ENCODE measurements at regions of chr6 and their contacts with region 1.

Region 1: GRCh38 chr6:26122793-26123674 is 35.8 kb downstream of the HFE start:
- DNase-seq: peak; percentile 79 to 97 (median 95)
- H3K4me3 ChIP-seq: peak overlapping the region; percentile 90
- H3K4me3 Mint-ChIP-seq: peak overlapping the region; percentile 92 to 100 (median 97)
- H3K27ac ChIP-seq: peak overlapping the region; percentile 97
- H3K27ac Mint-ChIP-seq: peak overlapping the region; percentile 95 to 99 (median 98)
- H3K4me1 ChIP-seq: peaks cover 26% of the 10 kb centered on the region
- H3K4me1 Mint-ChIP-seq: peaks cover 30 to 40% (median 38%) of the 10 kb centered on the region in 3 donors
- H3K27me3 ChIP-seq: no peaks in the 10 kb centered on the region
- H3K27me3 Mint-ChIP-seq: peaks cover 0 to 10% of the 10 kb centered on the region in 2 donors

Region 2: DNA sequence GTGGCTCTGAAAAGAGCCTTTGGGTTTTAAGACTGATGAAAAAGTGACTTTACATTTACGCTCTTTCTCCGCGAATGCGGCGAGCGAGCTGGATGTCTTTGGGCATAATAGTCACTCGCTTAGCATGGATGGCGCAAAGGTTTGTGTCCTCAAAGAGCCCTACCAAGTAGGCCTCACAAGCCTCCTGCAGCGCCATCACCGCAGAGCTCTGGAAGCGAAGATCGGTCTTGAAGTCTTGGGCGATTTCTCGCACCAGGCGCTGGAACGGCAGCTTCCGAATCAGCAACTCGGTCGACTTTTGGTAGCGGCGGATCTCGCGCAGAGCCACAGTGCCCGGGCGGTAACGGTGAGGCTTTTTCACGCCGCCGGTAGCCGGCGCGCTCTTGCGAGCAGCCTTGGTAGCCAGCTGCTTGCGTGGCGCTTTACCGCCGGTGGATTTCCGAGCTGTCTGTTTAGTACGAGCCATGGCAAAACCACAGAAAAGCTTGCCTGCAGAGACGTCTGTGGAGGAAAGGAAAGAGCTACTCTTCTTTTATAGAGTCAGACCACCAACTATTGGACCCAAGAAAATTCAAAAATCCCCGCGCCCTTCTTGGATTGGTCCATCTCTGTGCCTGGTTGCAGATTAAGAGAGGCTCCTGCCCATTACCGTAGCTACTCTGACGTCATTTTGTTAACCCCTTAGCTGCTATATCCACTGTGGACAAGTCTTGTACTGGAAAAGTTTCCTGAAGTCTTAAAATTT is 91.3 kb before region 1 on chr6:
- CTCF ChIA-PET with region 1: interaction called, 16 read pairs
- POLR2A ChIA-PET with region 1: interaction called, 58 read pairs
- DNase-seq: peak; percentile 75 to 91 (median 86)
- H3K4me3 ChIP-seq: peak overlapping the region; percentile 70
- H3K4me3 Mint-ChIP-seq: peak overlapping the region; percentile 89 to 97 (median 95)
- H3K27ac ChIP-seq: peak overlapping the region; percentile 85
- H3K27ac Mint-ChIP-seq: peak overlapping the region; percentile 96 to 99 (median 98)
- H3K4me1 ChIP-seq: peaks cover 30% of the 10 kb centered on the region
- H3K4me1 Mint-ChIP-seq: peaks cover 47 to 69% (median 53%) of the 10 kb centered on the region in 3 donors
- H3K27me3 ChIP-seq: no peaks in the 10 kb centered on the region
- H3K27me3 Mint-ChIP-seq: peaks cover 0 to 6% of the 10 kb centered on the region in 2 donors

Region 3: DNA sequence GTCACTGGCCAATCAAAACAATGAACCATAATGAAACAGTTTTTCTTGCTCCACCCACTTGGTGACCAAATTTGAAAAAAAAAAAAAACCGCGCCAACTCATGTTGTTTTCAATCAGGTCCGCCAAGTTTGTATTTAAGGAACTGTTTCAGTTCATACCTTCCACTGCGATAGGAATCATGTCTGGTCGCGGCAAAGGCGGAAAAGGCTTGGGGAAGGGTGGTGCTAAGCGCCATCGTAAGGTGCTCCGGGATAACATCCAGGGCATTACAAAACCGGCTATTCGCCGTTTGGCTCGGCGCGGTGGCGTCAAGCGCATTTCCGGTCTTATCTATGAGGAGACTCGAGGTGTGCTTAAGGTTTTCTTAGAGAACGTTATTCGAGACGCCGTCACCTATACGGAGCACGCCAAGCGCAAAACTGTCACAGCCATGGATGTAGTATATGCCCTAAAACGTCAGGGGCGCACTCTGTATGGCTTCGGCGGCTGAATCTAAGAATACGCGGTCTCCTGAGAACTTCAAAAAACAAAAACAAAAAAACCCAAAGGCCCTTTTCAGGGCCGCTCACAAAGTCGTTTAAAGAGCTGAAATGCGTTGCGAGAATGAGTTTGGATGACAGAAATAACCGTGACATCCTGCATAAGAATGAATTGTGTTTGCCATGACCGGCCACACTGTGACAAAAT is 19.1 kb before region 1 on chr6:
- CTCF ChIA-PET with region 1: interaction called, 23 read pairs
- POLR2A ChIA-PET with region 1: interaction called, 169 read pairs
- DNase-seq: peak; percentile 75 to 96 (median 93)
- H3K4me3 ChIP-seq: peak overlapping the region; percentile 51
- H3K4me3 Mint-ChIP-seq: peak overlapping the region; percentile 83 to 92 (median 87)
- H3K27ac ChIP-seq: peak overlapping the region; percentile 82
- H3K27ac Mint-ChIP-seq: peak overlapping the region; percentile 96 to 98 (median 97)
- H3K4me1 ChIP-seq: peaks cover 18% of the 10 kb centered on the region
- H3K4me1 Mint-ChIP-seq: peaks cover 16 to 20% (median 17%) of the 10 kb centered on the region in 3 donors
- H3K27me3 ChIP-seq: no peaks in the 10 kb centered on the region
- H3K27me3 Mint-ChIP-seq: peaks cover 0 to 4% of the 10 kb centered on the region in 2 donors

Region 4: GRCh38 chr6:26196846-26197648 is 74.0 kb after region 1 on chr6:
- CTCF ChIA-PET with region 1: interaction called, 62 read pairs
- POLR2A ChIA-PET with region 1: interaction called, 286 read pairs
- DNase-seq: peak; percentile 66 to 93 (median 90)
- H3K4me3 ChIP-seq: peak overlapping the region; percentile 84
- H3K4me3 Mint-ChIP-seq: peak overlapping the region; percentile 95 to 99 (median 96)
- H3K27ac ChIP-seq: peak overlapping the region; percentile 95
- H3K27ac Mint-ChIP-seq: peak overlapping the region; percentile 95 to 100 (median 98)
- H3K4me1 ChIP-seq: peaks cover 17% of the 10 kb centered on the region
- H3K4me1 Mint-ChIP-seq: peaks cover 33 to 63% (median 59%) of the 10 kb centered on the region in 3 donors
- H3K27me3 ChIP-seq: no peaks in the 10 kb centered on the region
- H3K27me3 Mint-ChIP-seq: peaks cover 0 to 4% of the 10 kb centered on the region in 2 donors

Region 5: GRCh38 chr6:26234421-26235296 is 111.6 kb after region 1 on chr6:
- CTCF ChIA-PET with region 1: interaction called, 13 read pairs
- POLR2A ChIA-PET with region 1: interaction called, 45 read pairs
- DNase-seq: peak; percentile 38 to 84 (median 76)
- H3K4me3 ChIP-seq: peak overlapping the region; percentile 94
- H3K4me3 Mint-ChIP-seq: peak overlapping the region; percentile 87 to 95 (median 91)
- H3K27ac ChIP-seq: peak overlapping the region; percentile 88
- H3K27ac Mint-ChIP-seq: peak overlapping the region; percentile 87 to 98 (median 96)
- H3K4me1 ChIP-seq: peaks cover 19% of the 10 kb centered on the region
- H3K4me1 Mint-ChIP-seq: peaks cover 28 to 35% (median 35%) of the 10 kb centered on the region in 3 donors
- H3K27me3 ChIP-seq: no peaks in the 10 kb centered on the region
- H3K27me3 Mint-ChIP-seq: peaks cover 0 to 5% of the 10 kb centered on the region in 2 donors

Region 6: DNA sequence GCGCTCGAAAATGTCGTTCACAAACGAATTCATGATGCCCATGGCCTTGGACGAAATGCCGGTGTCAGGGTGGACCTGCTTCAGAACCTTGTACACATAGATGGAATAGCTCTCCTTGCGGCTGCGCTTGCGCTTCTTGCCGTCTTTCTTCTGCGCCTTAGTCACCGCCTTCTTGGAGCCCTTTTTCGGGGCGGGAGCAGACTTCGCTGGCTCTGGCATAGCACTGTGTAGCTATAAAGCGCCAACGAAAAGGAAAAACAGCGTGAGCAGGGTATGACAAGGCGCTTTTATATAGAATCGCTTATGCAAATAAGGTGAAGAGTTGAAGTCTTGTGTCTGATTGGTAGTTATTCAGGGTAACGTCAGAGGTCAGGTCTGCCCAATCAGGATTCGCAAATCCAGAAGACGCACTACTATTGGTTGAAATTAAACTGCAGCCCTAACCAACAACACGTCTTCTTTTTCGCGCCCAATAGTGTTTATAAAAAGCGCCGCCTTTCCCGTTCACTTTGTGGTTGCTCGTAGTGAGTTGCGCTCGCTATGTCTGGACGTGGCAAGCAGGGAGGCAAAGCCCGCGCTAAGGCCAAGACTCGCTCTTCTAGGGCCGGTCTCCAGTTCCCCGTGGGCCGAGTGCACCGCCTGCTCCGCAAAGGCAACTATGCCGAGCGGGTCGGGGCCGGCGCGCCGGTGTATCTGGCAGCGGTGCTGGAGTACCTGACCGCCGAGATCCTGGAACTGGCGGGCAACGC is 1009.7 kb after region 1 on chr6:
- CTCF ChIA-PET with region 1: interaction called, 4 read pairs
- POLR2A ChIA-PET with region 1: interaction called, 26 read pairs
- DNase-seq: peak; percentile 77 to 98 (median 96)
- H3K4me3 ChIP-seq: peak overlapping the region; percentile 75
- H3K4me3 Mint-ChIP-seq: no peak overlapping the region
- H3K27ac ChIP-seq: peak overlapping the region; percentile 89
- H3K27ac Mint-ChIP-seq: no peak overlapping the region
- H3K4me1 ChIP-seq: peaks cover 20% of the 10 kb centered on the region
- H3K4me1 Mint-ChIP-seq: peaks cover 7 to 21% (median 16%) of the 10 kb centered on the region in 3 donors
- H3K27me3 ChIP-seq: no peaks in the 10 kb centered on the region
- H3K27me3 Mint-ChIP-seq: peaks cover 0 to 2% of the 10 kb centered on the region in 2 donors

Region 7: GRCh38 chr6:27893059-27893835 is 1770.2 kb after region 1 on chr6:
- CTCF ChIA-PET with region 1: interaction called, 3 read pairs
- POLR2A ChIA-PET with region 1: interaction called, 33 read pairs
- DNase-seq: peak; percentile 75 to 95 (median 91)
- H3K4me3 ChIP-seq: peak overlapping the region; percentile 82
- H3K4me3 Mint-ChIP-seq: no peak overlapping the region
- H3K27ac ChIP-seq: peak overlapping the region; percentile 79
- H3K27ac Mint-ChIP-seq: peak overlapping the region in 3 of 8 donors; percentile 94 to 97 (median 97)
- H3K4me1 ChIP-seq: peaks cover 19% of the 10 kb centered on the region
- H3K4me1 Mint-ChIP-seq: peaks cover 29 to 44% (median 40%) of the 10 kb centered on the region in 3 donors
- H3K27me3 ChIP-seq: no peaks in the 10 kb centered on the region
- H3K27me3 Mint-ChIP-seq: peaks cover 0 to 2% of the 10 kb centered on the region in 2 donors